Dendritic cell treated with granulocyte-macrophage colony-stimulating factor and Interleukin-4, amounts not matched to agents 40 ng/mL and 50 ng/mL, for 4 days (primary cell): ENCODE measurements at regions of chr9 and their contacts with region 1.

Region 1: GRCh38 chr9:68779558-68780384 is 74.7 kb downstream of the PIP5K1B start:
- H3K4me3 Mint-ChIP-seq: no peak overlapping the region
- H3K27ac Mint-ChIP-seq: no peak overlapping the region
- H3K4me1 Mint-ChIP-seq: peaks cover 5% of the 10 kb centered on the region
- H3K27me3 Mint-ChIP-seq: no peaks in the 10 kb centered on the region

Region 2: DNA sequence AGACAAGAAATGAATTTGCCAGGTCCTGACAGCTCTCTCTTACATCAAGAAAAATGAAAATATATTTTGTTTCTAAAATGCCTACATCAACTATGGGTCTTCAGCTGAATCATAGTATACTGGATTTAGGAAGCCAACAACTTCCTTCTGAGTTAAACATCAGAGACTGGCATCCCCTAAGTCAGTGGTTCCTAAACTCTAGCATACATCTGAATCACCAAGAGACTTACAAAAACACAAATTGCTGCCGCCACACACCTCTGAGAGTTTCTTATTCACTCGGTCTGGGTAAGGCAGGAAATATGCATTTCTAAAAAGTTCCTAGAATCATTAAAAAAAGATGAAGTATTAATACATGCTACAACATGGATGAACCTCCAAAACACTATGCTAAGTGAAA is 178.7 kb before region 1 on chr9:
- intact Hi-C with region 1: no loop called
- H3K4me3 Mint-ChIP-seq: no peak overlapping the region
- H3K27ac Mint-ChIP-seq: no peak overlapping the region
- H3K4me1 Mint-ChIP-seq: no peaks in the 10 kb centered on the region
- H3K27me3 Mint-ChIP-seq: peaks cover 2% of the 10 kb centered on the region

Region 3: DNA sequence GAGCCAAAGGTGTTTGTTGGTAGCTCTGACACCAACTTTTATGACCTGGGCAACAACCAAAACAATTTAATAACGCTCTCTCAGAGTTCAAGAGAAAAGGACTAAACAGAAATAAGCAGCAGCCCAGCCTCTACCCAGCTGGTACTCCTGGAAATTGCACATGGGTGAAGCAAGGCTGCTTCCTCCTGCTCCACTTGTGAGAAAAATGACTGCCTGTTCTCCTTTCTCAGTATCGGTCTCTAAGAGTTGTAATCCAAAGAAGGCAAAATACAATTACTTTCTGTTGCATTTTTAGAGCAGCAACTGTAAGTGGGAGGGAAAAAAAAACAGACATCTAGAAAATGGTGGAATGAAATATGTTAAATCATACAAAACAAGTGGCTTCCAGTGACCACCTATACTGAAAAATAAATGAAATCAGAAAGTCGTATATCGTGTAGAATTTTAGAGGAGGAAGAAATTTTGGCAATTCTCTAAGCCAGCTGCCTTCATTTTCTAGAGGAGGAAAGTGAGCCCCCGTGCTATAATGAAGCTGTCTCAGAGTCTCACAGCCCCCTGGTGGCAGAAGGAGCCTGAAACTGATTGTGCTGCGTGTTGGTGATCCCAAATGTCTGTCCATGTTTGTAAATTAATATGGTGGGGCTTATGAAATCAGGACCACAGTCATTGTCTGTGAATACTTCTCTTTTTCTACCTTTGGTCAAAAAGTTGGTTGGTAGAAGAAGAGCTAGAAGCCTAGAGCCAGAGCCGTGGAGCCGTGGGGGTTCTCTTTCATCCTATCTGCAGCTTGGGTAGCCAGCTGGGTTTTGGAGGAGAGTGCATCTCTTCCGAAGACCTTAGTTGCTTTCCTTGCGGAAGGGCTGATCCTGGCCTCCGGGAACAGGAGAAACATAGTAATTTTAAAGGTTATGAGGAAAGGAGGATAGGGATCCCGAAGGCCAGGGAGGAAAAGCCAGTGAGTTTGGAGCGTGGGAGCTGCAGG is 65.2 kb after region 1 on chr9:
- intact Hi-C with region 1: loop called (anchors 5 kb)
- H3K4me3 Mint-ChIP-seq: peak overlapping the region; percentile 79
- H3K27ac Mint-ChIP-seq: peak overlapping the region; percentile 86
- H3K4me1 Mint-ChIP-seq: peaks cover 45% of the 10 kb centered on the region
- H3K27me3 Mint-ChIP-seq: no peaks in the 10 kb centered on the region

Region 4: GRCh38 chr9:68951879-68952659 is 172.3 kb after region 1 on chr9:
- intact Hi-C with region 1: loop called (anchors 10 kb)
- H3K4me3 Mint-ChIP-seq: peak overlapping the region; percentile 47
- H3K27ac Mint-ChIP-seq: peak overlapping the region; percentile 88
- H3K4me1 Mint-ChIP-seq: peaks cover 60% of the 10 kb centered on the region
- H3K27me3 Mint-ChIP-seq: no peaks in the 10 kb centered on the region